MCF 10A (cell line): ENCODE measurements at regions of chr11 and their contacts with region 1.

Region 1: DNA sequence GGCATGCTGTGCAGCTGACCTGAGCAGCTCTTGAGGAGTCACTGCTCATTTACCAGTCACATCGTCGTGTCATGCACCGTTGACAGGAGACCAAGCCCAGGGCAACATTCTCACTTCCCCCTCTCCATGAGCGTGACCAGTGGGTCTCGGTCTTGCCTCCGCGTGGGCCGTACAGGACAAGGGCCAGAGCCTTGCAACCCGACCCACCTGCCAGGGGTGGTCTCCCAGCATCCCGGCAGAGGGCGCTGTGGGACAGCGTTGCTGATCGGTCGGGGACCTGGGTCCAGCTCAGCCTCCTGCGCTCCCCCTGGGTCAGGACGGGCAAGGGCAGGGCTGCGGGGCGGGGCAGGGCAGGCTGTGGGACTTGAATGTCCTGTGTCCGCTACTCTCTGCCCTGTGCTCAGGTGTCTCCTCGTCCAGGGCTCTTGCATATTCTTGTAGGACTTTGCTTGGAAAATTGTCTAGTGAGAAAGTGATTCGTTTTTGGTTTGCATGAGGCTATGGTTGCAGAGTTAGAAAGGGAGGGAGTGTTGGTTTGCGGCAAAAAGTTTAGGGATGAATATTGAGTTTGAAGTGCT is 16.2 kb downstream of the EIF4G2 start:
- DNase-seq: peak; percentile 88
- H3K4me3 Mint-ChIP-seq: no peak overlapping the region
- H3K27ac Mint-ChIP-seq: no peak overlapping the region
- H3K4me1 Mint-ChIP-seq: peaks cover 8% of the 10 kb centered on the region
- H3K27me3 Mint-ChIP-seq: no peaks in the 10 kb centered on the region
- CTCF ChIP-seq: peak; percentile 96

Region 2: GRCh38 chr11:10455637-10456487 is 336.6 kb before region 1 on chr11:
- CTCF ChIA-PET with region 1: no interaction called
- POLR2A ChIA-PET with region 1: no interaction called
- intact Hi-C with region 1: no loop called
- DNase-seq: peak; percentile 35
- H3K4me3 Mint-ChIP-seq: peak overlapping the region; percentile 60
- H3K27ac Mint-ChIP-seq: peak overlapping the region; percentile 92
- H3K4me1 Mint-ChIP-seq: no peaks in the 10 kb centered on the region
- H3K27me3 Mint-ChIP-seq: no peaks in the 10 kb centered on the region
- CTCF ChIP-seq: no peak

Region 3: DNA sequence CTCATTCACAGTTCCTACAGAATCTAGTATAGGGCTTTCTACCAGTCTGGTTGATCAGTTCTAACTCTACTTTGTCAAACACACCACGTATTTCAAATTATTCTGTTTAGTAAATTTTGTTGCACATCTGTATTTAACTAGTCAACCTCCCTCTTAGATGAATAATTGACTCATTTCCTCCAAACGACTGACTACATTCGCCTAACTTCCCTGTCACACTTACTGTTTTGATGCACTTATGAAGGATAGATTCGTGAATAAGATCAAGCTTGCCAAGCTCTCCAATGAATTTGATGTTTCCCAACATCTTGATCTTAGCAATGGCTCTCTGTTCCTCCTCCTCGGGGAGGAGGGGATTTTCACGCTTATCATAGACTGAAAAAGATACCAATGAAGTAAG is 11.2 kb after region 1 on chr11:
- CTCF ChIA-PET with region 1: interaction called, 31 read pairs
- POLR2A ChIA-PET with region 1: interaction called, 60 read pairs
- intact Hi-C with region 1: no loop called
- DNase-seq: no peak
- H3K4me3 Mint-ChIP-seq: no peak overlapping the region
- H3K27ac Mint-ChIP-seq: no peak overlapping the region
- H3K4me1 Mint-ChIP-seq: peaks cover 4% of the 10 kb centered on the region
- H3K27me3 Mint-ChIP-seq: no peaks in the 10 kb centered on the region
- CTCF ChIP-seq: no peak

Region 4: DNA sequence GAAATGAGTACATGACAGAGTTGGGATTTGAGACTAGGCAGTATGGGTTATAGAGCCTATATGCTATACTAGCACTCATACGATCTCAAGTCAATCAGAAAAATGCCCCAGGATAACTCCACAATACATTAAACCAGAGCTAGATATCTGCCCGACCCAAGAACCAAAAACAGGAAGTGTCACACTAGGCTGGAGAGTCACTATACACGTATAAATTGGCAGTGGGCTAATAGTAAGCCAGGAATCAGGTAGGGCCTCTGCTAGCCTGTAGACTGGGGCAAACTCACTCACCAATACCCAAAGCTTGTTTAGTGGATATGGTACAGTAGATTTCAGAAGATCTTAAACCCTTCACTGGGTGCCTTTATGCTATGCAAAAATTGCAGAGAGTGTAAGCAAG is 32.4 kb after region 1 on chr11:
- CTCF ChIA-PET with region 1: no interaction called
- POLR2A ChIA-PET with region 1: no interaction called
- intact Hi-C with region 1: no loop called
- DNase-seq: no peak
- H3K4me3 Mint-ChIP-seq: no peak overlapping the region
- H3K27ac Mint-ChIP-seq: no peak overlapping the region
- H3K4me1 Mint-ChIP-seq: no peaks in the 10 kb centered on the region
- H3K27me3 Mint-ChIP-seq: no peaks in the 10 kb centered on the region
- CTCF ChIP-seq: no peak

Region 5: DNA sequence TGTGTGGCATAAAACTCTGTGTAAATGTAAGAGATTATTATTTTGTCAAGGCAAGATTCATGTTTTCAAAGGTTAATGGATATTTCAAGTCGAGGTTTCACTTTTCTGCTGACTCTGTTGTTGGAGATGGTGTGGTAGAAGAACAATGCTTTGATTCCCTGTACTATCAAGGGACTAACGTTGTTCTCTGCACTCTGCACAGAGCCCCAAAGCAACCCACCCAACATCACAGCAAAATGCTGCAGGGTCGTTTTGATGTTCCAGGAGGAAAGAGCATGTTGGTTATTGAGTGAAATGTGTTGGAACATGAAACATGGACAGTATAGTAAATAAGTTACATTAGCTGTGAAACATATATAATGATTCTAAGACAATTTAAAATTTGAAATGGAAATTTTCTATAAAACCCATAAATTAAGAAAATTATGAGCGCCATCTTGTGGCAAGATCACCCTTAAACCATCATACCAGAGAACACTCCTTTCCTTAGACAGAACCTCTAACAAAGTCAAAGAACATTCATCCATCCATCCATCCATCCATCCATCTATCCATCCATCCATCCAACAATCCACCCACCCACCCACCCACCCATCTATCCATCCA is 229.7 kb after region 1 on chr11:
- CTCF ChIA-PET with region 1: interaction called, 39 read pairs
- POLR2A ChIA-PET with region 1: interaction called, 4 read pairs
- intact Hi-C with region 1: loop called (anchors 1 kb)
- DNase-seq: peak; percentile 36
- H3K4me3 Mint-ChIP-seq: no peak overlapping the region
- H3K27ac Mint-ChIP-seq: no peak overlapping the region
- H3K4me1 Mint-ChIP-seq: peaks cover 9% of the 10 kb centered on the region
- H3K27me3 Mint-ChIP-seq: no peaks in the 10 kb centered on the region
- CTCF ChIP-seq: peak; percentile 46

Region 6: GRCh38 chr11:11265994-11266606 is 473.6 kb after region 1 on chr11:
- CTCF ChIA-PET with region 1: interaction called, 5 read pairs
- POLR2A ChIA-PET with region 1: no interaction called
- intact Hi-C with region 1: loop called (anchors 5 kb)
- DNase-seq: peak; percentile 62
- H3K4me3 Mint-ChIP-seq: no peak overlapping the region
- H3K27ac Mint-ChIP-seq: no peak overlapping the region
- H3K4me1 Mint-ChIP-seq: peaks cover 9% of the 10 kb centered on the region
- H3K27me3 Mint-ChIP-seq: no peaks in the 10 kb centered on the region
- CTCF ChIP-seq: peak; percentile 84